ENCODE measurements at regions of chr9 and their contacts with region 1.

Region 1: DNA sequence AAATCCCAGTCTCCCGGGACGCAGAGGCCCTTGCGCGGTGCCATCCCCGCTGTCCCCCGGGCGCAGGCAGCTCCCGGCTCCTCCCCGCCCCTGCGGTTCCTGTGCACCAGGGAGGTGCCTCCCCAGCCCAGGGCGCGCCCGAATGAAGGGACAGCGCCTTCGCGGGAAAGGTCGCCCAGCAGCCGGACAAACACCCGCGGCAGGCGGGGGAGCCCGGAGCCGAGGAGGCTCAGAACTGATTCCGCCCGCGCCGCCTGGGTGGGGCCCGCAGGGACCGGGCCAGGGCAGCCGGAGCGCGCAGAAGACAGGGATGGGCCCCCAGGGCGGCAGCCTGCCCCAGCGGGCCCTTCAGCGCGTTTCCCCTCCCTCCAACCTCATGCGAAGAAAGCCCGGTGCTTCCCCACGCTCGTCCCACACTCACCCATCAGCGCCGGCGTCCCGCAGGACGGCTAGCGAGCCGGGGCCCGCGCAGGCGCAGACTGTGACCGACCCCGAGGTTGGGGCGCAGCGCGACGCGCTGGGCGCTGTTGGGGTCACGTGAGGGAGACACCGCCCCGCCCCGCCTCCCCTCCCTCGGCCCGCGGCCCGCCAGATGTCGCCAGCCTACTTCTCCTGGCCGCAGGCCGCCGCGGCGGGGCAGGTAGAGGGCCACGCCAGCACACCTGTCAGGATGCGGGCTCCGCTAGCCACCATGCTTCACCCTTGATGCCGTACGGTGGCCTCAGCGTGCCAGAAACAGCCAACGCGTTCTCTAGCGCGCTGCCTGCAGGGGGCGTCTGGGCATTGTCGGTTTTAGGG is at the start of gene SLC25A51:
- DNase-seq: peak; percentile 97
- H3K4me3 ChIP-seq: peak within 1 kb of the TSS; percentile 81
- H3K4me3 Mint-ChIP-seq: peak within 1 kb of the TSS; percentile 77
- H3K27ac Mint-ChIP-seq: peak within 1 kb of the TSS; percentile 91
- H3K4me1 ChIP-seq: peaks cover 26% of the 10 kb centered on the region
- H3K4me1 Mint-ChIP-seq: peaks cover 20% of the 10 kb centered on the region
- H3K27me3 ChIP-seq: no peaks in the 10 kb centered on the region
- H3K27me3 Mint-ChIP-seq: no peaks in the 10 kb centered on the region
- CTCF ChIP-seq: peak; percentile 88 to 96
- total RNA-seq, gene SLC25A51: 29.1 and 29.3 TPM in 2 replicates

Region 2: GRCh38 chr9:37485389-37486219 is 418.2 kb before region 1 on chr9 and contains the start of gene POLR1E:
- CTCF ChIA-PET with region 1: no interaction called
- POLR2A ChIA-PET with region 1: no interaction called
- intact Hi-C with region 1: loop called (anchors 1 kb)
- DNase-seq: peak; percentile 97 to 98
- H3K4me3 ChIP-seq: peak within 1 kb of the TSS; percentile 96
- H3K4me3 Mint-ChIP-seq: peak within 1 kb of the TSS; percentile 93
- H3K27ac Mint-ChIP-seq: peak within 1 kb of the TSS; percentile 89
- H3K4me1 ChIP-seq: peaks cover 24% of the 10 kb centered on the region
- H3K4me1 Mint-ChIP-seq: peaks cover 22% of the 10 kb centered on the region
- H3K27me3 ChIP-seq: no peaks in the 10 kb centered on the region
- H3K27me3 Mint-ChIP-seq: no peaks in the 10 kb centered on the region
- CTCF ChIP-seq: no peak
- total RNA-seq, gene POLR1E: 30.1 and 33.4 TPM in 2 replicates

Region 3: GRCh38 chr9:37784616-37785483 is 119.0 kb before region 1 on chr9 and contains the start of gene EXOSC3:
- CTCF ChIA-PET with region 1: no interaction called
- POLR2A ChIA-PET with region 1: no interaction called
- intact Hi-C with region 1: loop called (anchors 10 kb)
- DNase-seq: peak; percentile 91 to 92
- H3K4me3 ChIP-seq: peak within 1 kb of the TSS; percentile 97
- H3K4me3 Mint-ChIP-seq: peak within 1 kb of the TSS; percentile 97
- H3K27ac Mint-ChIP-seq: peak within 1 kb of the TSS; percentile 98
- H3K4me1 ChIP-seq: 0 out of 2 replicates have a peak, but pooled peaks cover 3% of the 10 kb centered on the region
- H3K4me1 Mint-ChIP-seq: peaks cover 9% of the 10 kb centered on the region
- H3K27me3 ChIP-seq: no peaks in the 10 kb centered on the region
- H3K27me3 Mint-ChIP-seq: no peaks in the 10 kb centered on the region
- CTCF ChIP-seq: peak; percentile 25 to 28
- total RNA-seq, gene EXOSC3: 60.3 and 70.6 TPM in 2 replicates

Region 4: GRCh38 chr9:37956904-37957671 is 53.2 kb after region 1 on chr9:
- CTCF ChIA-PET with region 1: no interaction called
- POLR2A ChIA-PET with region 1: no interaction called
- intact Hi-C with region 1: no loop called
- DNase-seq: no peak
- H3K4me3 ChIP-seq: no peak overlapping the region
- H3K4me3 Mint-ChIP-seq: no peak overlapping the region
- H3K27ac Mint-ChIP-seq: no peak overlapping the region
- H3K4me1 ChIP-seq: peaks cover 16% of the 10 kb centered on the region
- H3K4me1 Mint-ChIP-seq: peaks cover 20% of the 10 kb centered on the region
- H3K27me3 ChIP-seq: no peaks in the 10 kb centered on the region
- H3K27me3 Mint-ChIP-seq: no peaks in the 10 kb centered on the region
- CTCF ChIP-seq: no peak

Region 5: DNA sequence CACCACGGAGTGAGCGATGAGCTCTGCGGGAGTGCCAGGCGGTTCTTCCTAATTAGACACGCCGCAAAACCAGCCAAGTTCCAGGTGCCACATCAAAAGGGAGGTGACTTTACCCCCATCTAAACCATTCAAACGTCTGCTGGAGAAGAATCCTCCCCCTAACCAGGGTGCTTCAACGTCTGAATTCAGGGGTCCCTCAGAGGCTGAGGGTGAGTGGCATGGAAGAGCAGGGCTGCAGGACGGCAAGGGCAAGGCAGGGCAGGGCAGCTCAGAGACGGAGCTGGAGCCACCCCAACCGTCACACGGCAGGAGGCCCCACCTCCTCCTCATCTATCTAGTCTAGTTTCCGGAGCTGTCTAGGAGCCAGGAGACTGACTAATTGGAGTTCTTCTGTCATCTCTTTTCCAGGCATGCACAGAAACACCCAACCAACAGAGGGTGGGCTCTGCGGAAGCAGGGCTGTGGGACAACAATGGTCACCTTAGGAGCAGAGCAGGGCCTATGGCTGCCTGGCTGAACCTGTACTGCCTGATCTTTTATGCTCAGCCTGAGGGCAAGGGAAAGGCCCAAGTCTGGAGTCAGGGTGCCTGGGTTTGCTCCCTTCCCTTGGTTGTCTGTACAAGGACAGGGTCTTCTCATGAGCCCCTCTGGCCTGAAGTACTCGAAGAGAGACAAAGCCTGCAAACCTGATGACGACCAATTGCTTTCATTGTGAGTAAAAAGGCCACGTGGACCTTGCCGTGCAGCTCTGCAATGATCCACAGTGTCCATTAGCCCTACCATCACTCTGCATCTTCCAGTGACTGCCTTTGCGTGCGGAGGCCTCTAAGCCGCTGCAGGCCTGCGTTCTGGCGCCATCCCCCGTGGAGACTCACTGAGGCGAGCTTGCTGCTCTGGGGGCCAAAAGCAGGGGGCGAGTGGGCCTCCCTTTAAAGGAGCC is 81.1 kb after region 1 on chr9:
- CTCF ChIA-PET with region 1: no interaction called
- POLR2A ChIA-PET with region 1: no interaction called
- intact Hi-C with region 1: no loop called
- DNase-seq: no peak
- H3K4me3 ChIP-seq: no peak overlapping the region
- H3K4me3 Mint-ChIP-seq: no peak overlapping the region
- H3K27ac Mint-ChIP-seq: no peak overlapping the region
- H3K4me1 ChIP-seq: no peaks in the 10 kb centered on the region
- H3K4me1 Mint-ChIP-seq: peaks cover 6% of the 10 kb centered on the region
- H3K27me3 ChIP-seq: no peaks in the 10 kb centered on the region
- H3K27me3 Mint-ChIP-seq: no peaks in the 10 kb centered on the region
- CTCF ChIP-seq: no peak

Region 6: DNA sequence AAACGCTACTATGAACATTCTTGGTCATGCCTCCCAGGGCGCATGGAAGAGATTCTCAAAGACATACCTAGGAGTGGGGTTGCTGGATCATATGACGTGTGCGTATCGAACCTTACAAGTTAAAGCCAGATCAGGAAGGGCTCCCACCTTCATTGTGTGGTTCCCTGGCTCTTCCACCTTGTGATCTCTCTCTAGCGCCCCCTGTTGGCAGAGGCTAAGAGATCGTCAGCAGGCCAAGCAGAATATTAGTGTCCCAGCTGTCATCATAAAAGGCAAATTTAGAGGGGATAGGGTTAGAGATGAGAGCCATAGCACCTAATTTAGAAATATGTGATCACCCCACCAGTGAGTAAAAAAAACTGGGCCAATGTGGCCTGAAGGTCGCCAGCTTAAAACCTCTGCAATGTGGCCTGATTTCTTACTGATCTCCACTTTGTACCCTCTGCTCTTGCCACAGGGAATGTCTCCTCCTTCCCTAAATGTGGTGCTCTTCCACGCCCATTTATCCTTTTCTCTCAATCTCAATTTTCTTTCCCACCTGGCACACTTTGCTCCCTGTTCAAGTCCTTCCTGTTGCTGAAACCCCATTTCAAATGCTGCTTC is 256.9 kb after region 1 on chr9:
- CTCF ChIA-PET with region 1: no interaction called
- POLR2A ChIA-PET with region 1: no interaction called
- intact Hi-C with region 1: loop called (anchors 1 kb)
- DNase-seq: peak; percentile 64 to 75
- H3K4me3 ChIP-seq: no peak overlapping the region
- H3K4me3 Mint-ChIP-seq: no peak overlapping the region
- H3K27ac Mint-ChIP-seq: no peak overlapping the region
- H3K4me1 ChIP-seq: no peaks in the 10 kb centered on the region
- H3K4me1 Mint-ChIP-seq: no peaks in the 10 kb centered on the region
- H3K27me3 ChIP-seq: no peaks in the 10 kb centered on the region
- H3K27me3 Mint-ChIP-seq: no peaks in the 10 kb centered on the region
- CTCF ChIP-seq: peak; percentile 78 to 81

Region 7: DNA sequence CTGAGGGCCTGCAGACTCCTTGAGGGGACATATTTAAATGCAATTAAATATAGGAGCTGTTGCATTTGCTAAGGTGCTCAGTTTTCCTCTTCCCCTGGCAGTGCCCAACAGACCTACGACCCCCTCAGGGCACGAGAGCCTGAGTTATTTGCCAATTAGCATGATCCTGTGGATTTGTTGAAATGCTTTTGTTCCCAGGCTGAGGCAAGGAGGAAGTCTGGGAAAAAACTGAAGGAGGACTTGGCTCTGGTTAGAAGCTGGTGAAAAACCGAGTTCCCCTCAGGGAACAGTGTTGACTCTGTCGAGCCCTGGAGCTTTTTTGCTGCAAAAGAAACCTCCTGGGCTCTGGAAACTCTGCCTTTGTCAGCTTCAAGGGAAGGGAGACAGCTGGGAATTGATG is 268.7 kb after region 1 on chr9:
- CTCF ChIA-PET with region 1: no interaction called
- POLR2A ChIA-PET with region 1: no interaction called
- intact Hi-C with region 1: no loop called
- DNase-seq: no peak
- H3K4me3 ChIP-seq: no peak overlapping the region
- H3K4me3 Mint-ChIP-seq: no peak overlapping the region
- H3K27ac Mint-ChIP-seq: no peak overlapping the region
- H3K4me1 ChIP-seq: peaks cover 10% of the 10 kb centered on the region; the same call in 1 of the 2 replicates
- H3K4me1 Mint-ChIP-seq: peaks cover 21% of the 10 kb centered on the region
- H3K27me3 ChIP-seq: no peaks in the 10 kb centered on the region
- H3K27me3 Mint-ChIP-seq: no peaks in the 10 kb centered on the region
- CTCF ChIP-seq: no peak